ENCODE measurements at regions of chr6 and their contacts with region 1.

Region 1: DNA sequence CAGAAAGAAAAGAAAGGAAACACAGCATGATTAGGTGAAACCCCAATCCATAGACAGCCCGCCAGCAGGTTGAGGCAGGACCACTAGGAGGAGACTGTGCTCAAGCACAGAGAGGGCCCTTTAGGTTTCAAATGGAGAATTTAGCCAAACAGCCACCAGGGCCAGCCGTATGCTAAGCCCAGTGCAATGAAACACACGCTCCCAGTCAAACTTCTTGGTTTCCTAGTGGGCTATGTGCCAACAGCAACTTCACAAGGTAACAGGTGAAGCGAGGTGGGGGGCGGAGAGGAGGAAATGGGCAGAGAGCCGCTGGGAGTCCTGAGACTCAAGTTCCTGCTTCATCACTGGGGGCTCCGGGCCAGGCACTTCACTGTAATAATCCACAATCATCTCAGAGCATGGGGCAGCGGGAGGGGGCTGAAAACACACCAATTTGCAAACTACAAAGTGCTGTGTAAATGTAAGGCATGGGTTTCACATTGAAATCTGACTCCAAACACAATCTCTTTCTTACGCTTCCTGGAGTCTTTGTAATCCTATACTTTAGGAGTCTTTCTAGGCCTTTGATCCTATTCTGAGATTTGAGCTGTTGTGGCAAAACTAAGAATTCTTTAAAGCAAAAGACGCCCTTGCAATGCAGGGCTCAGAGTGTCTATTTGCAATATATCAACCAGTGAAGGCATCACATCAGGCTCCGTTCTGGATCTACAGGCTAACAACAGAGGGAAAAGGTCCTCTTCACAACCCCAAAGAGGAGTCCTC is 117.3 kb downstream of the OPRM1 start:
- DNase-seq: peak; percentile 92
- H3K4me3 ChIP-seq: no peak overlapping the region
- H3K27ac ChIP-seq: peak overlapping the region; percentile 59 to 81 (median 64)
- H3K4me1 ChIP-seq: peaks cover 20 to 29% of the 10 kb centered on the region in 2 donors
- H3K27me3 ChIP-seq: no peaks in the 10 kb centered on the region
- CTCF ChIP-seq: peak; percentile 50 to 97 (median 79)
- POLR2A ChIP-seq: peak in 1 of 2 donors; percentile 20

Region 2: GRCh38 chr6:154080461-154081189 is 75.7 kb before region 1 on chr6:
- intact Hi-C with region 1: no loop called
- DNase-seq: no peak
- H3K4me3 ChIP-seq: no peak overlapping the region
- H3K27ac ChIP-seq: no peak overlapping the region
- H3K4me1 ChIP-seq: no peaks in the 10 kb centered on the region
- H3K27me3 ChIP-seq: no peaks in the 10 kb centered on the region
- CTCF ChIP-seq: no peak
- POLR2A ChIP-seq: no peak

Region 3: DNA sequence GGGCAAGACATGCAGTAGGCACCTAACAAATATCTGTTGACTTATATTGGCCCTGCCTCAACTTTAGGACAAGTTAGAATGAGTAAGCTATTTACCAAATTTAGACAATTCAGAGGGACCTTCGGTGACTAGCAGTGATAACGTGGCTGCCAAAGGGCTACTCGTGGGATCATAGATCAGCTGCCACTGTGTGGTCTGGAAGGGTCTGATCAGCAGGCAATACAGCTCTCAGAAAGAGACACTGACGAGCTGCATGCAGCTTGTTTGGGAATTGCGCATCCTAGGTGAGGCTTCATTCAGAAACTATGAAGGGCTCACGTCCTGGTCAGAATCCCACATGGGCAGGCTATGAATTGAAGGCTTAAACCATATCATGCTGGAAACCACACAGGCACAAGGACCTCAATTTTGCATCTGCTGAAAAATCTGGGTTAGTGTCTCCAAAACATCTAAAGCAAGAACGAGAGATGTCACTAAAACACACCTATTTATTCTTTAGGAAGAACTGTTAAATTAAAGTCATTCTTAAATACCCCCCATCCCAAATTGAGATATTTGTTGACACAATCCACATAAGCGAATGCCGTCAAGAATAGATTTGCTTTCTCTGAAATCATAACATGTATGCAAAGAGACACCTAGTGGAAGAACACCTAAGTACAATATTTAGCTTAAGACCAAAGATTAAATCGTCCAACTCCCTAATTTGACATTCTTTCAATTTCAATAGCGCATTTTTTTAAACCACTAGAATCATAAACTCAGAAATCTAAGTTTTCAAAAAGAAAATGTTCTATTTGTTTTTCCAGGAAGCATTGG is 120.7 kb after region 1 on chr6:
- intact Hi-C with region 1: loop called (anchors 5 kb)
- DNase-seq: no peak
- H3K4me3 ChIP-seq: no peak overlapping the region
- H3K27ac ChIP-seq: peak overlapping the region in 1 of 3 donors; percentile 29
- H3K4me1 ChIP-seq: peaks cover 9 to 17% of the 10 kb centered on the region in 2 donors
- H3K27me3 ChIP-seq: no peaks in the 10 kb centered on the region
- CTCF ChIP-seq: peak in 4 of 6 experiments; percentile 41 to 68 (median 58)
- POLR2A ChIP-seq: no peak

Region 4: GRCh38 chr6:154370545-154370944 is 214.2 kb after region 1 on chr6:
- intact Hi-C with region 1: loop called (anchors 10 kb)
- DNase-seq: peak; percentile 44 to 46
- H3K4me3 ChIP-seq: no peak overlapping the region
- H3K27ac ChIP-seq: no peak overlapping the region
- H3K4me1 ChIP-seq: peaks cover 0 to 7% of the 10 kb centered on the region in 2 donors
- H3K27me3 ChIP-seq: no peaks in the 10 kb centered on the region
- CTCF ChIP-seq: peak in 5 of 6 experiments; percentile 8 to 64 (median 60)
- POLR2A ChIP-seq: no peak

Region 5: GRCh38 chr6:154460306-154461071 is 304.2 kb after region 1 on chr6:
- intact Hi-C with region 1: loop called (anchors 10 kb)
- DNase-seq: no peak
- H3K4me3 ChIP-seq: no peak overlapping the region
- H3K27ac ChIP-seq: no peak overlapping the region
- H3K4me1 ChIP-seq: peaks cover 10 to 13% of the 10 kb centered on the region in 2 donors
- H3K27me3 ChIP-seq: no peaks in the 10 kb centered on the region
- CTCF ChIP-seq: no peak
- POLR2A ChIP-seq: no peak